ENCODE measurements at regions of chr2 and their contacts with region 1.

Region 1: DNA sequence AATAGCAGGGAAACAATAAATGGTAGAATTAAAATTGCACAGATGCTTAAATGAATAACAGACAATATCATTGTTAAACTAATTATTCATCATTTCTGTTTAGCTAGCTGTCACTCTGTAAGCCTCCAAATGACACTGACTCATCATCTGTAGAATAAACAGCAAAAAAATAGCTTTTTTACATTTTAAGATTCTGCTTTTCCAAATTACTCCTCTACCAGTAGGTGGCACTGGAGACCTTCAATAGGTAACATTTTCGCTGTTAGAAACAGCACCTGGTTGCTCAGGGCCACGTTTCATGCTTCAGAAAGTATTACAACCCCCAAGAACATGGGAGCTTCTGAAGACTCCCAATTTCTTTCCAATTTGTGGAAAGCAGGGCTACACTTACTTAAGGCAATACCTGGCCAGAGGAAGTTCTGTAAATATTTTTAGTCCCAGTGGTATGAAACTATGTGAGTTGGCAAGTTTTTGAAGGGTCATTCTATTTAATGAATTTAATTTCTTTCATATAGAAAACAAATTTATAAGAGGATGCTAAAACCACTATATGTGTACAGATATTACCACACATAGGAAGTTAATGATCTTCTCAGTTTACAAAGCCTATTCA is 45.4 kb downstream of the TTN start:
- DNase-seq: peak in 6 of 14 experiments; percentile 0 to 57 (median 32)
- ATAC-seq: peak; percentile 41
- H3K4me3 ChIP-seq: no peak overlapping the region
- H3K4me3 Mint-ChIP-seq: no peak overlapping the region
- H3K27ac ChIP-seq: no peak overlapping the region
- H3K27ac Mint-ChIP-seq: no peak overlapping the region
- H3K4me1 ChIP-seq: no peaks in the 10 kb centered on the region
- H3K4me1 Mint-ChIP-seq: no peaks in the 10 kb centered on the region
- H3K27me3 ChIP-seq: no peaks in the 10 kb centered on the region
- H3K27me3 Mint-ChIP-seq: no peaks in the 10 kb centered on the region
- CTCF ChIP-seq: peak; percentile 85

Region 2: GRCh38 chr2:179440642-179441251 is 678.9 kb after region 1 on chr2:
- CTCF ChIA-PET with region 1: no interaction called
- POLR2A ChIA-PET with region 1: no interaction called
- intact Hi-C with region 1: loop called (anchors 10 kb)
- DNase-seq: peak in 3 of 14 experiments; percentile 31 to 54 (median 39)
- ATAC-seq: no peak
- H3K4me3 ChIP-seq: no peak overlapping the region
- H3K4me3 Mint-ChIP-seq: no peak overlapping the region
- H3K27ac ChIP-seq: no peak overlapping the region
- H3K27ac Mint-ChIP-seq: no peak overlapping the region
- H3K4me1 ChIP-seq: no peaks in the 10 kb centered on the region
- H3K4me1 Mint-ChIP-seq: no peaks in the 10 kb centered on the region
- H3K27me3 ChIP-seq: peaks cover 3 to 6% of the 10 kb centered on the region in 2 experiments
- H3K27me3 Mint-ChIP-seq: peaks cover 39% of the 10 kb centered on the region
- CTCF ChIP-seq: peak; percentile 76

Region 3: DNA sequence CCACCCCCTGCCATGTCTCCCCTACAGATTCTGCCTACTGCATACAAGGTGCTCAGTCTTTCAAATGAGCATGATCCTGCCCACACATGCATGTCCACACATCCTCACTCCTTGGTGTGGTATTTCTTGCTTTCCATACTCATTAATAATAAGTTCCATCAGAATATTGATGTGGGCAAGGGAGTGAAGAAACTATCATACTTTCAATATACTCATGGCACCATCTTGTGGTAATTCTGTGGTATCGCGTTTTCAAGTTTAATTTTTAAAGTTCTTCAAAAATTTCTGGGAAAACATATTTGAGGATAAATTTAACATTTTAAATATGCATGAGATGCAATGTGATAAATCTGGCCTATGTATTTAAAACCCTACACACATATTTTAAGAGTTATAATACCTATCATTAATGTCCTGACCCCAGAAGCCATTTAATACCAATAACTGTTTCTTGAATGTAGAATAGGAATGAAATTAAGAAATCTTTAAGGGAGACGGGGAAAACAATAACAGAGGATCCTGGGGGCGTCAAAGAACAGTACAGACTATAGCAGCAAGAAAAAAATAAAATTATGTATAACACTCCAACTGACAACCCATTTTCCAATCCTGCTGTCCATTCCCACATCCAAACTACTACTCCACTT is 989.4 kb after region 1 on chr2:
- CTCF ChIA-PET with region 1: no interaction called
- POLR2A ChIA-PET with region 1: no interaction called
- intact Hi-C with region 1: loop called (anchors 2 to 10 kb)
- DNase-seq: peak in 2 of 14 experiments; percentile 4 to 7
- ATAC-seq: no peak
- H3K4me3 ChIP-seq: no peak overlapping the region
- H3K4me3 Mint-ChIP-seq: no peak overlapping the region
- H3K27ac ChIP-seq: no peak overlapping the region
- H3K27ac Mint-ChIP-seq: no peak overlapping the region
- H3K4me1 ChIP-seq: no peaks in the 10 kb centered on the region
- H3K4me1 Mint-ChIP-seq: no peaks in the 10 kb centered on the region
- H3K27me3 ChIP-seq: no peaks in the 10 kb centered on the region
- H3K27me3 Mint-ChIP-seq: peaks cover 5% of the 10 kb centered on the region
- CTCF ChIP-seq: peak; percentile 38